ENCODE measurements at regions of chr2 and their contacts with region 1.

Region 1: DNA sequence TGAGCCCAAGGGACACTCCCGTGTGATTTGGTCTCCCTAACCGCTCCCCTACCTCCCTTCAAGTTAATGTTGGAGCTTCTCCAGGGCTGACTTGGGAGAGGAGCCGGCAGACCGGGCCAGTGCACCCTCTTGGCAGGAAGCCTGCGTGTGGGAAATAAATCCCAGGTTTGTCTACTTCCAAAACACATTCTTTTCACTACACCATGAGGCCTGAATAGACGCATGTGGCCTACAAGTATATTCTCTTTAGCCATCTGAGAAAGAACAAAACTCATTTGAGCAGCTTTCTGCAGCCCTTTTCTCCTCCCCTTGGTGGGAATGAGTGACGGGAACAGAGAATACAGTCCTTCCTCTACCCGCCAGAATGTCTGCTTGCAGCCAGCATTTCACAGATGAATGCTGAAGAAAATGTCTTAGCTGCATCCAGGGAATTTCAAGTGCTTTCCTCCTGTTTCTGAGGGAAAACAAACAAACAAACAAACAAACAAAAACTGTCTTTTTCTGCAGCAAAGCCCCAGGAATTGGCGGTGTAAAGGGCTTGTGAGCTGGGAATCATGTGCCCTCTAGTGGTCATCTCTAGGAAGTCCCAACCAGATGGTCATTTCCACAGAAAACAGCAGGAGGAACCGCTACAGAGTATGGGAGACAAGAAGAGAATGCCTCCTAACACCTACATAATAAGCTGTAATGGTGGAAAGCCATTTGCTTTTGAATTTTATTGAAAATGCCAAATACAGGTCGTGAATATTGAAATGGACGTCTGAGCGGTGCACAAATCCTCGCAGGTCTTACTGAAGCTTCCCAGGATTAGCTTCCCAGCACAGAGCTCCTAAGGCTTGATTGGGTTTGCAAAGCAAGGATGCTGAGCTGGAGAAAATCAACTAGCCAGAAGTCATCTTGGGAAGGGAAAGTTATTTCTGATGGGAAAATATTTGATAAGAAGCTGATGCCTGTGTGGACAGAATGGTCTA is 41.2 kb upstream of the DAPL1 start:
- DNase-seq: peak; percentile 61
- H3K4me3 ChIP-seq: no peak overlapping the region
- H3K27ac ChIP-seq: no peak overlapping the region
- H3K4me1 ChIP-seq: no peaks in the 10 kb centered on the region
- CTCF ChIP-seq: peak; percentile 90

Region 2: DNA sequence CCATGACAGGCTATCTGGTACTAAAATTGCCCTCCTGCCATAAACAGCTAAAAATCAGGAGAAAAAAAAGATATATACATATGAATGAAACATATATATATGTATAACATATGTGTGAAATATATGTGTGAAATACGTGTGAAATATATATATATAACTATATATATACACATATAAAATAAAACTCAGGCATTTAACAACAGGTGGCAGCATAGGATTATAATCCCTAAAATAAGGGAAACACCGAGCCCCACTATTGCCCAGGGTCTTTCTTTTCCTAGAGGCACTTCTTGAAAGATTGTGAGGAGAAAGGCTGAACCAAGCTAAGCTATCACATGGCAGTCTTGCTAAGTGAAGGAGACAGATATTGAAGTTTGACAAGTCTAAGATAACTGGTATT is 1244.2 kb before region 1 on chr2:
- CTCF ChIA-PET with region 1: no interaction called
- POLR2A ChIA-PET with region 1: no interaction called
- intact Hi-C with region 1: loop called (anchors 10 kb)
- DNase-seq: peak; percentile 11
- H3K4me3 ChIP-seq: no peak overlapping the region
- H3K27ac ChIP-seq: no peak overlapping the region
- H3K4me1 ChIP-seq: no peaks in the 10 kb centered on the region
- CTCF ChIP-seq: no peak; the same call in 1 of the 2 replicates

Region 3: GRCh38 chr2:158024288-158024898 is 729.5 kb before region 1 on chr2:
- CTCF ChIA-PET with region 1: no interaction called
- POLR2A ChIA-PET with region 1: no interaction called
- intact Hi-C with region 1: loop called (anchors 2 kb)
- DNase-seq: peak; percentile 45
- H3K4me3 ChIP-seq: no peak overlapping the region
- H3K27ac ChIP-seq: no peak overlapping the region
- H3K4me1 ChIP-seq: no peaks in the 10 kb centered on the region
- CTCF ChIP-seq: peak; percentile 93

Region 4: GRCh38 chr2:158179660-158180059 is 574.3 kb before region 1 on chr2:
- CTCF ChIA-PET with region 1: interaction called, 4 read pairs
- POLR2A ChIA-PET with region 1: no interaction called
- intact Hi-C with region 1: loop called (anchors 2 kb)
- DNase-seq: peak; percentile 9
- H3K4me3 ChIP-seq: no peak overlapping the region
- H3K27ac ChIP-seq: no peak overlapping the region
- H3K4me1 ChIP-seq: no peaks in the 10 kb centered on the region
- CTCF ChIP-seq: peak; percentile 69

Region 5: GRCh38 chr2:158456309-158457066 is 297.4 kb before region 1 on chr2 and contains the starts of genes CCDC148 and PKP4:
- CTCF ChIA-PET with region 1: no interaction called
- POLR2A ChIA-PET with region 1: no interaction called
- intact Hi-C with region 1: loop called (anchors 5 kb)
- DNase-seq: peak; percentile 92
- H3K4me3 ChIP-seq: peak within 1 kb of the TSS; percentile 80
- H3K27ac ChIP-seq: peak within 1 kb of the TSS; percentile 30
- H3K4me1 ChIP-seq: peaks cover 26% of the 10 kb centered on the region
- CTCF ChIP-seq: no peak
- total RNA-seq, gene CCDC148: 0.19 and 1.1 TPM in 2 replicates
- total RNA-seq, gene PKP4: 58.5 and 68.7 TPM in 2 replicates

Region 6: DNA sequence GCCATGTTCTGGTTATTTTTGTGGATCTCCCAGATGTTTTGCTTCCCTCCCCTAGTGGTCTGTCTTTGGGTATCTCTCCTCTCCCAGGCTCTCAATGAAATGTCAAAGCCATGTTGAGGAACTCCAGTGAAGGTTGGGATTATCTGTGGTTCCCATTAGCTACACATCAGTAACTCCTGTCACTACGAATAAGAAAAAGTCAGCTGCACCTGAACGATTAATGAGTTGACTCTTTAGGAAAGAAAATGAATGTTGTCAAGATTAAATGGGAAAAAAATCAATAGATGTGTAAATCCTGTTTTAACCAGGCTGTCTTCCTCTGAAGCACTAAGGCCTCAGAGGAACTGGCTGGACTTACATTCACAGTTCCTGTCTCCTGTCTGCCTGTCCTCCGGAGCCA is 52.8 kb before region 1 on chr2:
- CTCF ChIA-PET with region 1: no interaction called
- POLR2A ChIA-PET with region 1: no interaction called
- intact Hi-C with region 1: no loop called
- DNase-seq: no peak
- H3K4me3 ChIP-seq: no peak overlapping the region
- H3K27ac ChIP-seq: no peak overlapping the region
- H3K4me1 ChIP-seq: no peaks in the 10 kb centered on the region
- CTCF ChIP-seq: no peak